ENCODE measurements at regions of chr12 and their contacts with region 1.

Region 1: DNA sequence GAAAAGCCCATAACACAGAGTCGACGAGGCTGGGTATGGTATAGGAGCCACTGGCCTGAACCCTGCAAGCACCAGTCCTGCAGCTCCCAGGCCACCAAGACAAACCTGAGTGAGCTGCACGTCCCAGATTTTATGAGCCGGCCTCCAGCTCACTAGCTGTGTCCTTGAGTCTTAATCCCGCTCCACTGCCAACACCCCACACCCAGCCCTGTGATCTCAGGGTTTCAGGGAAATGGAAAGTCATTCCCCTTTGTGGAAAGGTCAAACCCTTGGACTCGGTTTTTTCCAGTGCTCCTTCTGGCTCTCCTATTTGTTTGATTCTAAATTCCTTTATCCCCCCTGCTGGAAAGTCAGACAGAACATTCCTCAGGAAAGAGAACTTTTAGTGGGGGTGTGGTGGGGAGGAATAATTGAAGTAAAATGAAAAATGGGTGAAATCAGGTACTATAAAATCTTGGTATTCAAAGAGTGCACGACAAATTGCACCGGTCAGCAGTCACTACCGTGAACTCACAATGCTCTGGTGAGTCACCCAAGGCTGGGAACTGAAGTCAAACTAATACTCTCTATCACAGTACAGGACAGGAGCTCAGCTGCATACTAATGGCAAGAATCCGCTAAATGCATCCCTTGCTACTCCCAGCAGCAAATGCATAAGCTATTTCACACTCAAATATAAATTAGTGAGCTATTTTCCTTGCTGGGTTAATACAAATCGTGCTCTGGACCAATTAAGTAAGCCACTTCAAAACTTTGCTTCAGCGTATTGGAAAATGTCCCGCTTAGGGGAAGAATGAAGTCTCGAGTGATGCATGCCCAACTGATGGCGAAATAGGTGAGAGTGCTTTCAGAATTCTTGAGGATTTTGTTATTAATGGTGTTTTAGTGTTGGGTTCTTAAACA is 9.0 kb downstream of the PITPNM2 start:
- DNase-seq: peak; percentile 33 to 60
- H3K4me3 ChIP-seq: no peak overlapping the region
- H3K4me3 Mint-ChIP-seq: peak overlapping the region; percentile 5
- H3K27ac Mint-ChIP-seq: peak overlapping the region; percentile 74
- H3K4me1 ChIP-seq: peaks cover 32% of the 10 kb centered on the region
- H3K4me1 Mint-ChIP-seq: peaks cover 6% of the 10 kb centered on the region
- H3K27me3 ChIP-seq: no peaks in the 10 kb centered on the region
- H3K27me3 Mint-ChIP-seq: no peaks in the 10 kb centered on the region
- CTCF ChIP-seq: no peak

Region 2: GRCh38 chr12:122980183-122981046 is 161.5 kb before region 1 on chr12 and contains the start of gene ARL6IP4:
- CTCF ChIA-PET with region 1: no interaction called
- POLR2A ChIA-PET with region 1: no interaction called
- intact Hi-C with region 1: loop called (anchors 10 kb)
- DNase-seq: peak in 1 of 2 experiments; percentile 69
- H3K4me3 ChIP-seq: peak within 1 kb of the TSS; percentile 86
- H3K4me3 Mint-ChIP-seq: peak within 1 kb of the TSS; percentile 89
- H3K27ac Mint-ChIP-seq: peak within 1 kb of the TSS; percentile 86
- H3K4me1 ChIP-seq: peaks cover 12% of the 10 kb centered on the region; the same call in 1 of the 2 replicates
- H3K4me1 Mint-ChIP-seq: peaks cover 6% of the 10 kb centered on the region
- H3K27me3 ChIP-seq: no peaks in the 10 kb centered on the region
- H3K27me3 Mint-ChIP-seq: no peaks in the 10 kb centered on the region
- CTCF ChIP-seq: peak in 1 of 2 experiments; percentile 6
- total RNA-seq, gene ARL6IP4: 99.6 and 103 TPM in 2 replicates

Region 3: DNA sequence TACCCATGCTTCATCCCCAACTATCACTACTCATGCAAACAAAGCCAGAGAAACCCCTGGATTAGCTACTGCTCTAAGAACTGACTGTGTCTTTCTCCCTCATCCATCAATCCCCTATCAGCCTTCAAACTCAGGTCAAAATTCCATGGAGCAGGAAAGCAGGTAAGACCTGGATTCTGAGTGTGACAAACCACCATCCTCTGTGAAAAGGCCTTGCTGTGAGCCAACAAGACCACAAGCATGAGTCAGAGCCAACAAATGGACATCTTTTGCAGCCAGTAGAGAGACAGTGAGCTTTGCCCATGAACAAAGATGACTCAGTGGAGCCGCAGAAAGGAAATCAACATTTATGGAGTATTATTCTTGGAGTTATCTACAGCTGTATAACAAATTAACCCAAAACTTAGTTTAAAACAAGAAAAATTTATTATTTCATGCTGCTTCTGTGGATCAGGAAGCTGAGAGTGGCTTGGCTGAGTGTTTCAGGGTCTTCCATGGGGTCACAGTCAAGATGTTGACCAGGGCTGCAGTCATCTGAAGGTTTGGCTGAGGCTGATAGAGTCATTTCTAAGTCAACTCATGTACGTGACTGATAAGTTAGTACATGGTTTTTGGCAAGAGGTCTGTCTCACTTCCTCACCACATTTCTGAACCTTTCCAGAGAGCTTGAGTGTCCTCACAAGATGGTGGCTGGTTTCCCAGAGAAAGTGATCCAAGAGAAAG is 52.1 kb before region 1 on chr12:
- CTCF ChIA-PET with region 1: no interaction called
- POLR2A ChIA-PET with region 1: no interaction called
- intact Hi-C with region 1: loop called (anchors 10 kb)
- DNase-seq: no peak
- H3K4me3 ChIP-seq: no peak overlapping the region
- H3K4me3 Mint-ChIP-seq: no peak overlapping the region
- H3K27ac Mint-ChIP-seq: no peak overlapping the region
- H3K4me1 ChIP-seq: peaks cover 19% of the 10 kb centered on the region
- H3K4me1 Mint-ChIP-seq: peaks cover 5% of the 10 kb centered on the region
- H3K27me3 ChIP-seq: no peaks in the 10 kb centered on the region
- H3K27me3 Mint-ChIP-seq: no peaks in the 10 kb centered on the region
- CTCF ChIP-seq: no peak

Measured in Caco-2 (cell line).